Calu3 (cell line): ENCODE measurements at regions of chr3 and their contacts with region 1.

Region 1: DNA sequence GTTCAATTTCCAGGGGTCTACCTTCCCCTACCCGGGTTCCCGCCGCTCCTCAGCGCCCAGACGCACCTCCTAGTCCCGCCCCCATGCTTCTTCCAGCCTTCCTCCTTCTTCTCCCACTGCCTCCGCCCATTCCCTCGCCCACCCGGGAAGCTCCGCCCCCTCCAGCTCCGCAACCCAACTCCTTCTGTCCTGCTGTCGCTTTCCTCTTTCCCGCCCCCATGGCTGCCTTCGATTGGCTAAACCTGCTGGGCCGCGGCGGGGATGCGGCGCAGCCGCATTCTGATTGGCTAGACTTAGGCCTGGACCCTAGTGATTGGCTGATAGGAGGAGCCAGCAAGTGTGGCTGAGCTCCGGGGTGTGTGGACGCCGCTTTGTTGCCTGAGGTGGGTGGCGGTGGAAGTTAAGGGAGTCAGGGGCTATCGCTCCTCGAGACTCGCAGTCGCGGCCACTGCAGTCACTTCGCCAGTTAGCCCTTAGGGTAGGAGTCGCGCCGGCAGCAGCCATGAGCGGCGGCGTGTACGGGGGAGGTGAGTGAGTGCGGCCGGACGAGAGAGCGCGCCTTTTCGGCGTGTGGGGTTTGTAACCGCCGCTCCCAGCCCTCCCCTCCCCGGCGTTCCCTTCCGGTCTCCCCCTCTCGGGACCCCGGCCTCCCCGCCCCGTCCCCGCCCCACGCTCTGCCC is at the start of gene ACTL6A:
- DNase-seq: peak; percentile 100
- H3K4me3 Mint-ChIP-seq: peak within 1 kb of the TSS; percentile 93
- H3K27ac Mint-ChIP-seq: peak within 1 kb of the TSS; percentile 95
- H3K4me1 Mint-ChIP-seq: peaks cover 23% of the 10 kb centered on the region
- H3K27me3 Mint-ChIP-seq: no peaks in the 10 kb centered on the region
- CTCF ChIP-seq: no peak
- total RNA-seq, gene ACTL6A: 148 and 158 TPM in 2 replicates

Region 2: DNA sequence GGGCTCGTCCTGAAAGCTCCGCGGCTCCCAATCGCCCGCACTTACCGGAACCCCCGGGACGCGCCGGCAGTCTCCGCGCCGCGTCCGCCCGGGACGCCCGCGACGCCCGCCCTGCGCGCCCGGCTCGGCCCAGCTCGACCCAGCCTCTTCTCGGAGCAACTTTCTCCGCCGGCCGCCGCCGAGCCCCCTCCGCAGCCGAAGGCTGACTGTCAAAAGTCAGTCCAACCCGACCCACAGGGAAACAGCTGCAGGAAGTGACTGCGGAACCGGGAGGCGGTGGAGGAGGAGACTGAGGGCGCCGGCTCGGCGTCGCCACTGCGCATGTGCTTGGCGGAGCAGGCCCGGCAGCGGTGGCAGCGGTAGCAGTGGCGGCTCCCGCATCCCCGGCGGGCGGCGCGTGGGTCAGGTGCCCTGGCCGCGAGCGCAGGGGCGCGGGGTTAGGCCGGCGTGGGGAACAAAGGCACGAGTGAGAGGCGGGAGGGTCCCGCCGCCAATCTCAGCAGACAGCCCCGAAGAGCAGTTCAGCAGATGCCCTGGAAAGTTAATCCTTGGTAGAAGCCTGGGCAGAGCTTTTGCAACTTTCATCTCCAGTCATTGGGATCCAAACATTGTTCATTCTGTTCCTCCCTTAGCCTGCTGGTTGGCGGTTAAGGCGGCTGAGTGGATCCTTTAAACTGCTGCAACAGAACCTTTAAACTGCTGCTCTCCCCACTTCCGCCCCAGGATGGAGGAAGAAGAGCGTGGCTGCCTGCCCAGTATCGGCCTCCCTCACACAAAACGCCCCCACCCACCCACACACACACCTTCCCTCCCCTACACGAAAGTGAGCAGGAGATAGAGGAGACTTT is 491.0 kb before region 1 on chr3 and contains the start of gene ZMAT3:
- CTCF ChIA-PET with region 1: no interaction called
- intact Hi-C with region 1: loop called (anchors 10 kb)
- DNase-seq: peak; percentile 90
- H3K4me3 Mint-ChIP-seq: peak within 1 kb of the TSS; percentile 95
- H3K27ac Mint-ChIP-seq: peak within 1 kb of the TSS; percentile 69
- H3K4me1 Mint-ChIP-seq: peaks cover 26% of the 10 kb centered on the region
- H3K27me3 Mint-ChIP-seq: no peaks in the 10 kb centered on the region
- CTCF ChIP-seq: no peak
- total RNA-seq, gene ZMAT3: 10.5 and 12.1 TPM in 2 replicates

Region 3: DNA sequence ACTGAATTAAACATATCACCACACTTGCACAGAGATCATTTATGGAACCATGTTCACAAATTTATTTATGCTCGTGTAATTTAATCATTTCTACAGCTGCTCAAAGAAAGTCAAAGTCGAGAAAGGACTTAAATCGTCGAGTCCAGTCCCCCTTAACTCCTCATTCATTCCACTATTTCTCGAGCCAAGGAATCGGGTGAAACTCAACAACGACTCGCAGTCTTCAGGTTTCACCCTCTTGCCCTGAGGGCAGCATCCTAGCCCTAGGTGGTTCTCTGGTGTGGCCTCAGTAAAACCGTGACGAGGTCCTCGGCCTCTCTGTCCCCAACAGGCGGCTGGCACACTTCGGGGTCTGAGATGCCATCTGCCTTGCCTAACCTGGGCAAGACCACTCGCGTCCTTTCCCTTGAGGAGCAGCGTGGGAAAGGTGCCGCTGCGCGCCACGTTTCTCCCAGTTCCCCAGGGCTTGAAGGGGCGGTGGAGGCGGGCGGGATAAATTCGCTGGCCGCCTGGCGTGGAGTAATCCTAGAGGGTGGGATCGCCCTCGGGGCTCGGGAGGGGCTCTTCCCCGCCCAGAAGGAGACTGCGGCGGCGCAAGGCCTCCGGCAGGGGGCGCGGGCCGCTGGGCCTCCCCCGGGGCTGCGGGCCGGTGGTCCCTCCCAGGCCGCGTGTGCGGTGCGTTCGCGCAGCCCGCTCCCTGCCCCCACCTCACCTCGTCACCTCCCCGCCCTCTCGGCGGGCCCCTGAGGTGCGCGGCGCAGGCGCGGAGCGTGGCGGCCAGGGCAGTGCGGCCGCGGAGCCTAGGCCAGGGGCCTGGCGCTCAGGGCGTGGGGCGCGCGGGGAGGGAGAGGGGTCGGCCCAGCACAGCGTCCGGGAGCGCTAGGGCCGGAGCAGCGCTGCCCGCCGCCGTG is 240.2 kb before region 1 on chr3 and contains the start of gene ZNF639:
- CTCF ChIA-PET with region 1: interaction called, 5 read pairs
- intact Hi-C with region 1: loop called (anchors 2 kb)
- DNase-seq: peak; percentile 94
- H3K4me3 Mint-ChIP-seq: peak within 1 kb of the TSS; percentile 85
- H3K27ac Mint-ChIP-seq: peak within 1 kb of the TSS; percentile 75
- H3K4me1 Mint-ChIP-seq: peaks cover 30% of the 10 kb centered on the region
- H3K27me3 Mint-ChIP-seq: no peaks in the 10 kb centered on the region
- CTCF ChIP-seq: peak; percentile 99
- total RNA-seq, gene ZNF639: 48.0 and 52.1 TPM in 2 replicates

Region 4: GRCh38 chr3:179369621-179370020 is 193.1 kb before region 1 on chr3:
- CTCF ChIA-PET with region 1: interaction called, 10 read pairs
- intact Hi-C with region 1: no loop called
- DNase-seq: no peak
- H3K4me3 Mint-ChIP-seq: no peak overlapping the region
- H3K27ac Mint-ChIP-seq: no peak overlapping the region
- H3K4me1 Mint-ChIP-seq: no peaks in the 10 kb centered on the region
- H3K27me3 Mint-ChIP-seq: no peaks in the 10 kb centered on the region
- CTCF ChIP-seq: no peak

Region 5: DNA sequence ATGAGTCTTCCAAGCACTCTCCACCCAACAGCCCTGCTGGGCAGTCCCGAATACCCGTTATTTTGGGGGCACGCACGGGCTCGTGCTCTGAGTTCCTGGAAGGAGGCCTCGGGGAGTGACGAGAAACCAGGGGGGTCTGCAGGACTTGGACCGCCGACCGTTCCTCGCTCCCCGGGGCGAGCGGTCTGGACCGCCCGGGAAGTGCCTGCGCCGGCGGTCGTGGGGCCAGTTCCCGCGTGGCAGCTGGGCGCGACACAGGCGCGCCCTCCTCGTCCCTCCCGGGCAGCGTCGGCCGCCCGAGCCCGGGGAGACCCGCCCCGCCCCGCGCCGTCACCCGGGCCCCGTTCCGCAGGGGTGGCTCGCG is 111.8 kb before region 1 on chr3:
- CTCF ChIA-PET with region 1: interaction called, 6 read pairs
- intact Hi-C with region 1: loop called (anchors 1 kb)
- DNase-seq: no peak
- H3K4me3 Mint-ChIP-seq: peak overlapping the region; percentile 75
- H3K27ac Mint-ChIP-seq: peak overlapping the region; percentile 46
- H3K4me1 Mint-ChIP-seq: peaks cover 20% of the 10 kb centered on the region
- H3K27me3 Mint-ChIP-seq: no peaks in the 10 kb centered on the region
- CTCF ChIP-seq: no peak